Heart right ventricle (tissue), 16 donors: ENCODE measurements at regions of chr5 and their contacts with region 1.

Region 1: GRCh38 chr5:41869739-41870626 is at the start of gene OXCT1:
- DNase-seq: peak; percentile 75 to 83
- ATAC-seq: peak; percentile 74 to 90 (median 85)
- H3K4me3 ChIP-seq: peak within 1 kb of the TSS; percentile 48 to 85 (median 77)
- H3K27ac ChIP-seq: peak within 1 kb of the TSS; percentile 79 to 95 (median 92)
- H3K4me1 ChIP-seq: peaks cover 0 to 37% (median 23%) of the 10 kb centered on the region in 9 donors
- H3K27me3 ChIP-seq: no peaks in the 10 kb centered on the region
- CTCF ChIP-seq: no peak
- total RNA-seq, gene OXCT1: 93.2 to 340 (median 261) TPM

Region 2: GRCh38 chr5:41903892-41904799 is 34.2 kb after region 1 on chr5 and contains the start of gene RIMOC1:
- intact Hi-C with region 1: loop called in 7 of 10 experiments (anchors 1 to 5 kb)
- DNase-seq: peak; percentile 98 to 99
- ATAC-seq: peak; percentile 98 to 100 (median 99)
- H3K4me3 ChIP-seq: peak within 1 kb of the TSS; percentile 34 to 93 (median 70)
- H3K27ac ChIP-seq: peak within 1 kb of the TSS; percentile 51 to 92 (median 87)
- H3K4me1 ChIP-seq: peaks cover 0 to 49% (median 37%) of the 10 kb centered on the region in 9 donors
- H3K27me3 ChIP-seq: peaks cover 0 to 4% (median 0%) of the 10 kb centered on the region in 7 donors
- CTCF ChIP-seq: no peak
- total RNA-seq, gene RIMOC1: 10.2 to 27.6 (median 17.1) TPM

Region 3: DNA sequence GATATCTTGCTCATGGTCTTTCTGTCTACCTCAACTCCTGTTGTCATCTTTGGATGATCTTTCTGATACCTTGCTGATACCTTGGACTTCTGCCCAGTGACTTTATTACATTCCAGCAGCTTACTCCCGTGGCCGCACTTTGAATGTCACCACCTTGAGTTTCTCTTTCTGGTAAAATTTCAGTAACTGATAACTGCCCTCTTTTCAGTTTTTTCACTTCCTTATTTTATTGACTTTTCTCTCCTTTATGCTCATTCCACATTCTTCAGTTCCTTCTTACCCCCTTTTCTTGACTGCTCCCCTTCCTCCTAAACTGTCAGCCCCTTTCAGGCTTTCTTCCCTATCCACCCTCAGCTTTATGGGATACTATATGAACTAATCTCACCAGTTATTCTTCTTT is 48.1 kb after region 1 on chr5:
- intact Hi-C with region 1: loop called in 1 of 10 experiments (anchors 10 kb)
- DNase-seq: no peak
- ATAC-seq: no peak
- H3K4me3 ChIP-seq: no peak overlapping the region
- H3K27ac ChIP-seq: no peak overlapping the region
- H3K4me1 ChIP-seq: peaks cover 0 to 14% (median 0%) of the 10 kb centered on the region in 9 donors
- H3K27me3 ChIP-seq: no peaks in the 10 kb centered on the region
- CTCF ChIP-seq: no peak